ENCODE measurements at regions of chr11 and their contacts with region 1.

Region 1: GRCh38 chr11:68297812-68298658 is 14.4 kb upstream of the LRP5 start:
- H3K4me3 Mint-ChIP-seq: no peak overlapping the region
- H3K27ac Mint-ChIP-seq: no peak overlapping the region
- H3K4me1 Mint-ChIP-seq: peaks cover 33% of the 10 kb centered on the region
- H3K27me3 Mint-ChIP-seq: peaks cover 20% of the 10 kb centered on the region

Region 2: GRCh38 chr11:68251765-68252164 is 46.3 kb before region 1 on chr11:
- intact Hi-C with region 1: no loop called
- H3K4me3 Mint-ChIP-seq: no peak overlapping the region
- H3K27ac Mint-ChIP-seq: no peak overlapping the region
- H3K4me1 Mint-ChIP-seq: peaks cover 4% of the 10 kb centered on the region
- H3K27me3 Mint-ChIP-seq: peaks cover 3% of the 10 kb centered on the region

Region 3: GRCh38 chr11:68383976-68384501 is 86.0 kb after region 1 on chr11:
- intact Hi-C with region 1: loop called (anchors 5 kb)
- H3K4me3 Mint-ChIP-seq: no peak overlapping the region
- H3K27ac Mint-ChIP-seq: no peak overlapping the region
- H3K4me1 Mint-ChIP-seq: peaks cover 44% of the 10 kb centered on the region
- H3K27me3 Mint-ChIP-seq: peaks cover 28% of the 10 kb centered on the region

Region 4: GRCh38 chr11:68447015-68447801 is 149.2 kb after region 1 on chr11:
- intact Hi-C with region 1: loop called (anchors 1 kb)
- H3K4me3 Mint-ChIP-seq: no peak overlapping the region
- H3K27ac Mint-ChIP-seq: no peak overlapping the region
- H3K4me1 Mint-ChIP-seq: peaks cover 7% of the 10 kb centered on the region
- H3K27me3 Mint-ChIP-seq: no peaks in the 10 kb centered on the region